Posterior cingulate gyrus (tissue), 11 donors: ENCODE measurements at regions of chr14 and their contacts with region 1.

Region 1: DNA sequence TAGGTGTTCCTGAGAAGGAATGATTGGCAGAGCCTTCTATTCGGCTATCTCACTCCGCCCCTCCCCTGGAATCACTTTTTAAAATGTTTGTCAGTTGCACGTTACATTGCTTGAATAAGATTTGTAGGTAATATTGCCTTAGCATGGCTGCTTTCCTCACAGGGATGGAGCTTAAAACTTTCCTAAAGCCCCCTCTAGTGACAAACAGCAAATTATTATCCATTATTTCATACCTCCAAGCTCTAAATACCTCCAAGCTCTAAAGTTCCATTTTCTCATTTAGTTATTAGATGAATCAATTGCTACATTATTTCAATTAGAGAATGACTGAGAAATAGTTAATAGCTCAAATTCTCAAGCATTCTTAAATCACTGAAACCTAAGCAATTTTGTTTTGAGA is 5.1 kb upstream of the SPATA7 start:
- DNase-seq: no peak

Region 2: DNA sequence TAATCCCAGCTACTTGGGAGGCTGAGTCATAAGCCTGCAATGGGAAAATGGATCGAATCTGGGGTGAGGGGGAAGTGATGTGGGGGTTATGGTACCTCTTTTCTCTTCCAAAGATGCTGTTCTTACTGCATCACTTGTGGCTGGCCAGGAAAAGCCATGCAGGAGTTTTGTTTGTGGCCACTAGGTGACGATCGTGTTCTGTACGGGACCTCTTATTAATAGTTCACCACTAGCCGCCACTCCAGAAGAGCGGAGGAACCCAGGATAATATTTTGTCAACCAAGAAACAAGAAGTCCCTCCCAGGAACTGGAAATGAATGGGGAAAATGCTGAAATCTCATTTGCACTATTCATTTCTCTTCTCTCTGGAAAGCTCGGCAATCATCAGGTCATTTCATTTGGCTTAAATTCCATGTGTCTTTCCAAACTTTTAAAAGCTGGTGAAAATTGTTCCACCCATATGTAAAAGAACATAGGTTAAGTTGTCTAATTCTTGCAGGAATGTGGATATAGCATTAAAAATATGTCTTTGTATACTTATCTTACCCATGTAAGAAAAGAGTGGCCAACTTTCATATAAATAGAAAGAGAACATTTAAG is 366.6 kb before region 1 on chr14:
- intact Hi-C with region 1: loop called (anchors 2 kb)
- DNase-seq: peak; percentile 34 to 95 (median 67)

Region 3: GRCh38 chr14:88189417-88190191 is 190.8 kb before region 1 on chr14:
- intact Hi-C with region 1: loop called (anchors 1 kb)
- DNase-seq: peak in 5 of 10 donors; percentile 32 to 83 (median 72)